ENCODE measurements at regions of chr2 and their contacts with region 1.

Region 1: GRCh38 chr2:26008822-26009566 is 24.9 kb upstream of the RAB10 start:
- DNase-seq: peak; percentile 100
- H3K4me3 ChIP-seq: no peak overlapping the region
- H3K27ac ChIP-seq: peak overlapping the region; percentile 91
- H3K4me1 ChIP-seq: peaks cover 35% of the 10 kb centered on the region
- H3K27me3 ChIP-seq: no peaks in the 10 kb centered on the region
- CTCF ChIP-seq: no peak

Region 2: DNA sequence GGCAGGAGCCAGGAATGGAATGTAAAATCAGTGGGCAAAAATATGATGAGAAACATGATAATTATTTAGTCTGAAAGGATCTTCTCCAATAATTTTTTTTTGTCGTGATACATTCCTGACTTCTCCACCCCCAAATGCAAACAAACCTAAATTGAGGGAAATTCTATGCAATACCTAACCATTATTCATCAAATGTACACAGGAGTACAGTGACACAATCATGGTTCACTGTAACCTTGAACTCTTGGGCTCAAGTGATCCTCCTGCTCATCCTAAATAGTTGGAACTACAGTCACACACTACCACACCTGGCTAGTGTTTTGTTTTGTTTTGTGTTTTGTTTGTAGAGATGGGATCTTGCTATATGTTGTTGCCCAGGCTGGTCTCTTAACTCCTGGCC is 71.4 kb after region 1 on chr2:
- CTCF ChIA-PET with region 1: no interaction called
- dilution Hi-C with region 1: no loop called
- in situ Hi-C with region 1: no loop called
- intact Hi-C with region 1: loop called (anchors 2 kb)
- DNase-seq: no peak
- H3K4me3 ChIP-seq: no peak overlapping the region
- H3K27ac ChIP-seq: peak overlapping the region; percentile 27
- H3K4me1 ChIP-seq: peaks cover 4% of the 10 kb centered on the region
- H3K27me3 ChIP-seq: no peaks in the 10 kb centered on the region
- CTCF ChIP-seq: no peak

Region 3: GRCh38 chr2:26114151-26114550 is 105.2 kb after region 1 on chr2:
- CTCF ChIA-PET with region 1: interaction called, 11 read pairs
- dilution Hi-C with region 1: no loop called
- in situ Hi-C with region 1: no loop called
- intact Hi-C with region 1: no loop called
- DNase-seq: no peak
- H3K4me3 ChIP-seq: no peak overlapping the region
- H3K27ac ChIP-seq: no peak overlapping the region
- H3K4me1 ChIP-seq: no peaks in the 10 kb centered on the region
- H3K27me3 ChIP-seq: no peaks in the 10 kb centered on the region
- CTCF ChIP-seq: no peak